ENCODE measurements at regions of chrX and their contacts with region 1.

Region 1: DNA sequence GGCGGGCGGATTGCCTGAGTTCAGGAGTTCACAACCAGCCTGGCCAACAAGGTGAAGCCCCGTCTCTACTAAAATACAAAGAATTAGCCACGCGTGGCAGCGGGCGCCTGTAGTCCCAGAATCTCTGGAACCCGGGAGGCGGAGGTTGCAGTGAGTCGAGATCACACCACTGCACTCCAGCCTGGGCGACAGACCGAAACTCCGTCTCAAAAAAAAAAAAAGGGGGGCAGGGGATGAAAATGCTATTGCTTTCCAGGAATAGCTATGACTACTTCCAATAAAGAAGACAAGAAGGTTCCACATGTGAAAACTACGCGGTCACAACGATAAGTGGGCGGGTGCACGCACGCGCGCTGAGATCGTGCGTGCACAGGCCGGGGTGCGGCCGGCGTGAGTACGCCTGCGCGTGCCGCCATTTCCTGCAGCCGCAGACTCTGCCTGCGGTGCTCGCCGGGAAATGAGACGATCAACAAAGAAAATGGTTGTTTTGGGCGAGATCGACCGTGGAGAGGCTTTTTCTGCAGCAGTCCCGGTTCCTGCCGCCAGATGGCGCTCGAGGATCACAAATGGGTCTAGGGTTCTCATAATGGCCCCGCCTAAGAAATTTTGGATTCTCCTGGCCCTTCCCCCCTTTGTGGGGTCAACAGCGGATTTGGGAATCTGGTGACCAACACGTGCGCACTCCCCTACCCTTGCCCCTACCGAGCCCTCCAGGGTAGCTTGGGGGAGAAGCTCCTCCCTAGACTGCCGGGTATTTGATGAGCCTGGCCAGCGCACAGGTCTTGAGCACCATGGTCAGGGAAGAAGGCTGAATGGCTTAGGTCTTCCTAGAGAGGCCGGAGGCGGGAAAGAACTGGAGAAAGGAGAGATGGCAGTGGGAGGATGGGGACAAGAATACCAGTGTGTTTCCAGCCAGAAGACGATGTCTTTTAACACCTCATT is 35.1 kb downstream of the PNMA5 start:
- DNase-seq: peak; percentile 83
- H3K4me3 Mint-ChIP-seq: peak overlapping the region; percentile 34
- H3K27ac Mint-ChIP-seq: peak overlapping the region; percentile 89
- H3K4me1 Mint-ChIP-seq: peaks cover 7% of the 10 kb centered on the region
- H3K27me3 Mint-ChIP-seq: no peaks in the 10 kb centered on the region

Region 2: GRCh38 chrX:152117305-152117704 is 841.5 kb before region 1 on chrX:
- intact Hi-C with region 1: no loop called
- DNase-seq: no peak
- H3K4me3 Mint-ChIP-seq: no peak overlapping the region
- H3K27ac Mint-ChIP-seq: no peak overlapping the region
- H3K4me1 Mint-ChIP-seq: no peaks in the 10 kb centered on the region
- H3K27me3 Mint-ChIP-seq: no peaks in the 10 kb centered on the region

Region 3: GRCh38 chrX:152941328-152942106 is 17.3 kb before region 1 on chrX:
- intact Hi-C with region 1: loop called (anchors 1 kb)
- DNase-seq: peak; percentile 85
- H3K4me3 Mint-ChIP-seq: peak overlapping the region; percentile 85
- H3K27ac Mint-ChIP-seq: peak overlapping the region; percentile 53
- H3K4me1 Mint-ChIP-seq: peaks cover 15% of the 10 kb centered on the region
- H3K27me3 Mint-ChIP-seq: no peaks in the 10 kb centered on the region

Region 4: GRCh38 chrX:153216926-153217325 is 258.1 kb after region 1 on chrX:
- intact Hi-C with region 1: no loop called
- DNase-seq: no peak
- H3K4me3 Mint-ChIP-seq: no peak overlapping the region
- H3K27ac Mint-ChIP-seq: no peak overlapping the region
- H3K4me1 Mint-ChIP-seq: no peaks in the 10 kb centered on the region
- H3K27me3 Mint-ChIP-seq: peaks cover 2% of the 10 kb centered on the region

Region 5: GRCh38 chrX:153333768-153334645 is 375.2 kb after region 1 on chrX and contains the start of gene ZNF275:
- intact Hi-C with region 1: loop called (anchors 5 kb)
- DNase-seq: peak; percentile 78
- H3K4me3 Mint-ChIP-seq: peak within 1 kb of the TSS; percentile 86
- H3K27ac Mint-ChIP-seq: peak within 1 kb of the TSS; percentile 90
- H3K4me1 Mint-ChIP-seq: peaks cover 49% of the 10 kb centered on the region
- H3K27me3 Mint-ChIP-seq: peaks cover 4% of the 10 kb centered on the region
- total RNA-seq, gene ZNF275: 22.1 and 22.5 TPM in 2 replicates

Region 6: DNA sequence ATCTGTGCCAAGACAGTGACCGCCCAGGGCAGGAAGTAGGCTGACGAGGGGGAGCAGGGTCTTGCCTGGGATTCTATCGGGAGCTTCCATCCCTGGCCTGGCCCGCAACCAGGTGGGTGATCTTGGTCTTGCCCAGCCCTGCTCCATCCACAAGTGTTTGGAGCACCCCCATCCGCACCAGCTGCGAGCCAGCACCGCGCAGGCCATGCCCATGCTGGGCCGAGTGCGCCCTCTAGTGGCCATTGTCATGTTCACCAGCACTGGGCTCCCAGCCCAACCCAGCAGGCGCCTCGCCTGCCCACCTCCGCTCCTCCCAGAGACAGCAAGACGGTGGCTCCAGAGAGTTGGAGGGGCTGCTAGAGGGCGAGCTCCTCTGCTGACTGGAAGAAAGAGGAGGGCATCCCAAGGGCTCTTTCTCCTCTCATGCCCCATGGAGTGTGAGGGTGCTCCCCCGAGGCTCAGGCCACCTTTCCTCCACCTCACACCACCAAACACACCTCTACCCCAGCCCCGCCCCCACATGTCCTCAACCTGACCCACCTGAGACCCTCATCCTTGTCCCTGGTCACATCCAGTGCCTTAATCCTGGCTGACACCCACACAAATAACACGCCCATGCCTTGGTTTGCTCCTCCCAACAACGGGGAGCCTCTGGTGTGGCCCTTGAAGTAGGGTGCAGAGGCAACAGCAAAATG is 548.8 kb after region 1 on chrX:
- intact Hi-C with region 1: loop called (anchors 1 kb)
- DNase-seq: peak; percentile 70
- H3K4me3 Mint-ChIP-seq: no peak overlapping the region
- H3K27ac Mint-ChIP-seq: no peak overlapping the region
- H3K4me1 Mint-ChIP-seq: no peaks in the 10 kb centered on the region
- H3K27me3 Mint-ChIP-seq: no peaks in the 10 kb centered on the region

Region 7: GRCh38 chrX:153662266-153662665 is 703.5 kb after region 1 on chrX:
- intact Hi-C with region 1: loop called (anchors 1 kb)
- DNase-seq: peak; percentile 11
- H3K4me3 Mint-ChIP-seq: peak overlapping the region; percentile 37
- H3K27ac Mint-ChIP-seq: no peak overlapping the region
- H3K4me1 Mint-ChIP-seq: no peaks in the 10 kb centered on the region
- H3K27me3 Mint-ChIP-seq: peaks cover 21% of the 10 kb centered on the region

Measured in activated T-helper 1 cell treated with anti-CD3 and anti-CD28 coated beads, Interleukin-12 subunit alpha, Interleukin-12 subunit beta, Interleukin-2, Interleukin-4 antibody, amounts not matched to agents 30 ng/mL and 10 ng/mL and 1 ng/mL, durations not matched to agents 14 hours and 24 hours and 36 hours (primary cell).